BJ (cell line): ENCODE measurements at regions of chr6 and their contacts with region 1.

Region 1: GRCh38 chr6:3848925-3849605 is at the start of gene FAM50B:
- DNase-seq: peak; percentile 51
- H3K4me3 ChIP-seq: peak within 1 kb of the TSS; percentile 46
- H3K27me3 ChIP-seq: no peaks in the 10 kb centered on the region
- CTCF ChIP-seq: peak; percentile 95
- polyA plus RNA-seq, gene FAM50B: 9.0 and 9.9 TPM in 2 replicates

Region 2: DNA sequence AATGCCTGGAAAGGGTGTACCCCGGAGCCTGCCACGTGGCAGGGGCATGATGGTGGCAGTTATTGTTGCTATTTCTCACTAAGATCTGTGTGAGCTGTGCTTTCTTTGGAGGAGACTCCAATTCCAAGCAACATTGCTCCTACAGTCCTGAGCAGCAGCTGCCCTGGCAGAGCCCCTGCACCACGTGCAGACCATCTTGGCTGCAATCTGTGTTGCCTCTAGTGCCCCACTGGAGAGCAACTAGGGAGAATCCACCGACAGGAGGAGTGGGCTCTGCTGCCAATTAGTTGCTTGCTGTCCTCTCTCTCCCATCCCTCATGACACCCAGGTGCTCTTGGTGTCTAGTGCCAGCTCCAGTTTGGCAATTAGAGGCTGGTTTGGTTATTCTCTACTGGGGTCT is 213.6 kb before region 1 on chr6:
- CTCF ChIA-PET with region 1: no interaction called
- POLR2A ChIA-PET with region 1: no interaction called
- DNase-seq: no peak
- H3K4me3 ChIP-seq: no peak overlapping the region
- H3K27me3 ChIP-seq: no peaks in the 10 kb centered on the region
- CTCF ChIP-seq: no peak

Region 3: DNA sequence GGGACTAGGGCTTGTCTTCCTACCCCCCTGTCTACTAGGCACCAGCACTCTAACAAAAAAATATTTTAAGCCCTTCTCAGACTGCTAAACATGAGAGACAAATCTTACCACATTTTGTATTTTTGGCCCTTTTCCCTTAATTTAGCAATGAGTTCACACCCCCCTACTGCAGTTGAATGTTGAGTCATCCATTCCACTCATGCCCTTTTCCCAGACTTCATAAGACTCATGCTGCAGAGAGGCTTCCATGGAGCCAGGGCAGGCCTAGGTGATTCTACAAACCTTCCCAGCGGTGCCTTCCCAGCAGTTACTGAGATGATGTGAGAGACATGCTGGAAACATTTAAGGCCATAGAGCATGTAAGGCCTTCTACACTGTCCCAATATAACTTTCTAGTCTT is 151.5 kb before region 1 on chr6:
- CTCF ChIA-PET with region 1: no interaction called
- POLR2A ChIA-PET with region 1: no interaction called
- DNase-seq: peak; percentile 88
- H3K4me3 ChIP-seq: no peak overlapping the region
- H3K27me3 ChIP-seq: no peaks in the 10 kb centered on the region
- CTCF ChIP-seq: no peak

Region 4: GRCh38 chr6:3748208-3749066 is 100.6 kb before region 1 on chr6:
- CTCF ChIA-PET with region 1: interaction called, 40 read pairs
- POLR2A ChIA-PET with region 1: interaction called, 3 read pairs
- DNase-seq: peak; percentile 24
- H3K4me3 ChIP-seq: peak overlapping the region; percentile 65
- H3K27me3 ChIP-seq: no peaks in the 10 kb centered on the region
- CTCF ChIP-seq: peak; percentile 82

Region 5: DNA sequence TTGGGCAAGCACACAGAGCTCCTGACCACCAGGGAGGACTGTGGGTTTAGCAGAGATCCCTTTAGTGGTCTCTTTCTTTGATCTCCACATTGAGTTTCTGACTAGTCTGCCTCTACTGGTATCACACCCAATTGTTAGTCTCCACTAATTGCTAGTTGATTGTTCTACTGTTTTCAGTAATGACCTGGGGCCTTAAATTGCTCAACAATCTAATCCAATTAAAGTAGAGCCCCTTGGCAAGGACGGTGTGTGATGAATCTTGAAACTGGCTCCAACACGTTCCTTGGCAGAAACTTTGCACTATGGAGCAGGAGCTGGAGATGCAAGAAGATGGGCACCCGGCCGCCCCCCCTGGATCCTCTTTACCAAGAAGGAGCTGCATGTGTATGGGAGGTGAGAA is 12.4 kb after region 1 on chr6:
- CTCF ChIA-PET with region 1: interaction called, 21 read pairs
- POLR2A ChIA-PET with region 1: no interaction called
- DNase-seq: no peak
- H3K4me3 ChIP-seq: no peak overlapping the region
- H3K27me3 ChIP-seq: no peaks in the 10 kb centered on the region
- CTCF ChIP-seq: no peak

Region 6: GRCh38 chr6:3887150-3887700 is 38.2 kb after region 1 on chr6:
- CTCF ChIA-PET with region 1: interaction called, 39 read pairs
- POLR2A ChIA-PET with region 1: no interaction called
- DNase-seq: no peak
- H3K4me3 ChIP-seq: no peak overlapping the region
- H3K27me3 ChIP-seq: no peaks in the 10 kb centered on the region
- CTCF ChIP-seq: peak; percentile 63

Region 7: GRCh38 chr6:3913077-3913957 is 64.3 kb after region 1 on chr6:
- CTCF ChIA-PET with region 1: interaction called, 34 read pairs
- POLR2A ChIA-PET with region 1: no interaction called
- DNase-seq: peak; percentile 98
- H3K4me3 ChIP-seq: no peak overlapping the region
- H3K27me3 ChIP-seq: no peaks in the 10 kb centered on the region
- CTCF ChIP-seq: no peak

Region 8: DNA sequence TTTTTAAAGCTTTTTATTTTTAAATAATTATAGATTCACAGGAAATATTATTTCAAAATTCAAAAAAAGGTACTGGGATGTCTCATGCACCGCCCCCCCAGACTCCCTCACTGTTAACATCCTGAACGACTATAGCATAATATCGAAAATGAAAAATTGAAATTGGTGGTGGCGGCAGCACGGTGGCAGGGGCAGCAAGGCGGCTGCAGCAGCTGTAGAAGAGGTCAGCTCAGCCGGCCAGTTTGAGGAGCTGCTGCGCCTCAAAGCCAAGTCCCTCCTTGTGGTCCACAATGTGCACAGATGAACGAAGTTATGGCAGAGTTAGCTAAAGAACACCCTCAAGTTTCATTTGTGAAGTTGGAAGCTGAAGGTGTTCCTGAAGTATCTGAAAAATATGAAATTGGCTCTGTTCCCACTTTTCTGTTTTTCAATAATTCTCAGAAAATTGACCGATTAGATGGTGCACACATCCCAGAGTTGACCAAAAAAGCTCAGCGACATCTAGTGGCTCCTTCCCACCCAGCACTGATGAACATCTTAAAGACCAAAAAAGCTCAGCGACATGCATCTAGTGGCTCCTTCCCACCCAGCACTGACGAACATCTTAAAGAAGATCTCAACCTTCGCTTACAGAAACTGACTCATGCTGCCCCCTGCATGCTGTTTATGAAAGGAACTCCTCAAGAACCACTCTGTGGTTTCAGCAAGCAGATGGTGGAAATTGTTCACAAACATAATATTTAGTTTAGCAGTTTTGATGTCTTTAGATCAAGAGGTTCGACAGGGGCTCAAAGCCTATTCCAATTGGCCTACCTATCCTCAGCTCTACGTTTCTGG is 129.0 kb after region 1 on chr6:
- CTCF ChIA-PET with region 1: interaction called, 77 read pairs
- POLR2A ChIA-PET with region 1: no interaction called
- DNase-seq: peak; percentile 58
- H3K4me3 ChIP-seq: no peak overlapping the region
- H3K27me3 ChIP-seq: no peaks in the 10 kb centered on the region
- CTCF ChIP-seq: peak; percentile 75